ENCODE measurements at regions of chr4 and their contacts with region 1.

Region 1: GRCh38 chr4:83929550-83929949 is 393.6 kb downstream of the GPAT3 start:
- DNase-seq: no peak
- H3K4me3 ChIP-seq: no peak overlapping the region
- CTCF ChIP-seq: no peak
- POLR2A ChIP-seq: no peak

Region 2: GRCh38 chr4:83535520-83536361 is 393.8 kb before region 1 on chr4 and contains the start of gene GPAT3:
- intact Hi-C with region 1: no loop called
- DNase-seq: peak; percentile 67 to 96
- H3K4me3 ChIP-seq: peak within 1 kb of the TSS; percentile 57
- CTCF ChIP-seq: no peak
- POLR2A ChIP-seq: no peak
- total RNA-seq, gene GPAT3: 4.0 to 8.5 (median 6.4) TPM

Region 3: DNA sequence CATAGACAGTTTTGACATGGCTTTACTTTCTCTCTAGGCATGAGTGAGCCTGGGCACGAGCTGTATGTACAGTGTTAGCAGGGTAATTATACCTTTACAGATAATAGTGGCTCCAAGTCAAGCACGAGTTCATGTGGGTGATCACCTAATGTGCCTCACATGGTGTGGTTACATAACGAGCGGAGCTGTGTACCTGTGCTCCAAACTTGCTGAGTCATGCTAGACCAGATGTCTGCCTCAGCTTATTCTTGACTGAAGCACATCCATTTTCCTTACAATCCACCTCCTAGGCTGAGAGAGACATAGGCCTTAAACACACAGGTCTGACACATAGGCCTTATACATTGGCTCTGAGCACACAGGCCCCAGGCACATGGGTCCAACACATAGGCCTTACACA is 32.9 kb after region 1 on chr4:
- intact Hi-C with region 1: loop called (anchors 2 kb)
- DNase-seq: no peak
- H3K4me3 ChIP-seq: no peak overlapping the region
- CTCF ChIP-seq: no peak
- POLR2A ChIP-seq: no peak

Measured in lower leg skin (tissue), 4 donors.